Head of caudate nucleus (tissue), 42 donors: ENCODE measurements at regions of chr1 and their contacts with region 1.

Region 1: DNA sequence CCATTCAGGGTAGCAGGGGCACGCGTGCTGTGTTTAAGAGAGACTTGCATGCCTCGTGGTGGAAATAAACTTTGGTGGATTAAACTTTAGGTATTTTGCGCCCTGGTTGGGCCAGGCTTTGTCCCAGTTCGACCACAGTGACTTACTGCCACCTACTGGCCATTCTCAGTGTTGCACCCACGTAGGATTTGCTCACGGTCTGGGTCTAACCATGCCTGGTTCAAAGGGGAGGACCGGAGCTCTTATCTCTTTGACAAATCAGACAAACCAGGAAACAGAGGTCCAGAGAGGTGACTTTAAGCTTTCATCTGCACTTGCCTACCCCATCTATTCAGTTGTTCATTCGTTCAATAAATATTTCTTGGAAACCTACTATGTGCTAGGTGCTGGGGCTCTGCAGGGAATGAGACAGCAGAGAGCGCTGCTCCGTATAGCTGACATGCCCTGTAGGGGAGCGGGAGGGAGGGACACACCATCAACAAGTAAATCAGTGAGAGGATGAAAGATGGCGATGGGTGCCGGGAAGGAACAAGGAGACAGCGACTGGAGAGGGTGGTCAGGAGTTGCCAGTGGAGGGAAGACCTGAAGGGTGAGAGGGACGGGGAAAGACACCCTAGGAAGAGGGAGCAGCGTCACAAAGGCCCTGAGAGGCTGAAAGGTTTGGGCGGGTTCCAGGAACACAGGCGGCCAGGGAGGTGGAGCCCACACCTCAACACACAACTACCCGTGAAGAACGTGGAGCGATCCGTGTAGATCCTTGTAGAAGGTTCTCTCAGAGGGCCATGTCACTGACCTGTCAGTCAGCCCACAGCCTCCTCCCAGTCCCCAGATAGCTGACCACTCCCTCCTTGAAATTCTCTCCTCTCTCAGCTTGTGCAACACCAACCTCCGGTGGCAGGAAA is 27.2 kb upstream of the TINAGL1 start:
- DNase-seq: peak; percentile 60 to 94 (median 87)

Region 2: GRCh38 chr1:31166462-31166861 is 382.7 kb before region 1 on chr1:
- intact Hi-C with region 1: loop called (anchors 10 kb)
- DNase-seq: no peak

Region 3: GRCh38 chr1:31248293-31248692 is 300.9 kb before region 1 on chr1:
- intact Hi-C with region 1: no loop called
- DNase-seq: no peak

Region 4: GRCh38 chr1:31394628-31395193 is 154.4 kb before region 1 on chr1:
- intact Hi-C with region 1: loop called (anchors 5 kb)
- DNase-seq: peak; percentile 58 to 94 (median 84)

Region 5: GRCh38 chr1:31460027-31460426 is 89.1 kb before region 1 on chr1:
- intact Hi-C with region 1: no loop called
- DNase-seq: no peak